ENCODE measurements at regions of chr11 and their contacts with region 1.

Region 1: DNA sequence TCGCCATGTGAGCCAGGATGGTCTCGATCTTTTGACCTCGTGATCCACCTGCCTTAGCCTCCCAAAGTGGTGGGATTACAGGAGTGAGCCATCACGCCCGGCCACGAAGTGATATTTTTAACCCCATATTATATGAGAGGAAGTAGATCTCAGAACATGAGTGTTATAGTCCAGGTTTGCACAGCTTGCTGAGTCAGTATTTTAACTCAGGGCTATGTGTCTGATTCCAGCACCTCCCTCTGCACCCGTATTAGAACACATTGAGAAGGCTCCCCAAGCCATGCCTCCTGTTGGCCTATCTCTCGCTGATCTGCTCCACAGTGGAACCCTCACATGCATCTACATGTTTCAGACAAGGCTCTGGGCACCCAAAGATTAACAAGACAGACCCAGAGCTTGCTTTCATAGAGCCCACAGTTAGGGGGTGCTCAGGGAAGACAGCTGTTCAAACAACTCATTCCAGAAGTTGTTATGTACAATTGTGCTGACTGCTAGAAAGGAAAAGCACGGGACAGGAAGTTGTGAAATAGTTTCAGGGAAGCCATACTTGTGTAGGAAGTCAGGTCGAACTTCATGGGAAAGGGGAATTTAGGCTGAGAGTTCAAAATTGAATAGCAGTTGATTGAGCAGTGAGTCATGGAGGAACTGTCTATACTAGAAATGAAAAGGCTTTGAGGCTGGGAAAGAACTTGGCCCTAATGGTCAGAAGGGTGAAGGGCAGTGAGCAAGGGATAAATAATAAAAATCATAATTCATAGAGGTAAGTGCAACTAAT is 49.3 kb upstream of the CLPB start:
- DNase-seq: no peak
- ATAC-seq: peak; percentile 49
- H3K4me3 Mint-ChIP-seq: no peak overlapping the region
- H3K27ac Mint-ChIP-seq: peak overlapping the region; percentile 40
- H3K4me1 Mint-ChIP-seq: peaks cover 16% of the 10 kb centered on the region
- H3K27me3 Mint-ChIP-seq: peaks cover 8% of the 10 kb centered on the region

Region 2: DNA sequence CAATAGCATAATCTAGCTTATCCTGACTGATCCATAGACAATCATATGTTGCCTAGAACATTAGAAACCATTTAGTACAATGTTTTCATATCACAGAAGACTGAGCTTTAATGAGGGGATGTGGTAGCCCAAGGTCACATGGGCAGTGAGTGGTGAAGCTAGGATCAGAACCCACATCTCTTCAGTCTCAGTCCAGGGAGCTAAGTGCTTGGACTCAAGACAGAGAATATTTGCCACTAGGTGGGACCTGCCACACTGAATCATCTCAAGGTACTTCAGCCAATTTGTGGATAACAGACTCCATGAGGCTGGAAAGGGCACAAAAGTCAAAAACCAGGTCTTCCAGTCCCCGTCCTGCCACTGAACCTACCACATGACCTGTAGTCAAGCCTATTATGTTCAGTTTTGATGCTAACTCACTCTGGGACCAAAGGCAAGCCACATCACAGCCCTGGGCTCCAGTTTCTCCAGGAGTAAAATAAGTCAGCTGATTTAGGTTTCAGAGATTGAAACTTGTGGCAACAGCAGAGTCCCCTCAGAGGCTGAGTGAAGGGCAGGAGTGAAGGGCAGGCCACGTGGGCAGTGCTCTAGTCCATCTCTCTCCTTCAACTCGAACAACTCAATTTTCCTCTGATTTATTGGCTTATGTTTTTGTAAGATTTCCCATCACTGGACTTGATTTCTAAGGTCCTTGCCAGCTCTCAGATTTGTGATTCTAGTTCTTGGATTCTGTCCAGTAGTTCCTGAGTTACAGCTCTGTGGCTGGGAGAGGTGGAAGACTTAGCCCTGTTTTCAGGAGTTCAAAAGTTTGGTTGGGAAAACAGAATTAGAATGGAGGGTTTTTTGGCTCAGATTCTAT is 155.0 kb before region 1 on chr11:
- CTCF ChIA-PET with region 1: no interaction called
- DNase-seq: peak; percentile 62
- ATAC-seq: peak; percentile 55
- H3K4me3 Mint-ChIP-seq: no peak overlapping the region
- H3K27ac Mint-ChIP-seq: peak overlapping the region; percentile 64
- H3K4me1 Mint-ChIP-seq: peaks cover 62% of the 10 kb centered on the region
- H3K27me3 Mint-ChIP-seq: no peaks in the 10 kb centered on the region

Region 3: DNA sequence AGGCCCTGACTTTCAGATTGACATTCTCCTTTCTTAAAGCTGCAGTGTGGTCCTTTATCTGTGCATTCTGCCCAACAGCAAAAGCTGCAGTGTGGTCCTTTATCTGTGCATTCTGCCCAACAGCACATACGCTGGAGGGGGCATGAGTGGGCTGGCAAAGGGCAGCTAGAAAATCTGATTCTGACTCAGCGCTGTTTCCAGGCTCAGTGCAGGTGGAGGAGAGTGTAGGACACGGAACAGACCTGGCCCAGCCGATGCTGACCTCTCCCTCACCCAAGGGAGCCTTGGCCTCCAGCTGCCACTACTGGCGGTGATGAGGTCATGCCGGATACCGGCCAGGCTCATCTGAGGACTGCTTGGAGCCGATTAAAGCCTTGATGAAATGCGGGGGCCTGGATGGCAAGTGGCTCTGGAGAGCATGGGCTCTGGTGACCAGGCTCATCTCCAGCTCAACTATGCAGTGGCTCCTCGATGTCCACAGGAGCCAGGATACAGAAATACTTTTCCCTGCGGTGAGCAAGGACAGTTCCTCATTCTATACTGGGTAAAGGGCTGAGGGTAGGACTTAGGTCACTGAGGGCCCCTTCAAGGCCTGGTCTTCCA is 133.9 kb before region 1 on chr11:
- CTCF ChIA-PET with region 1: no interaction called
- DNase-seq: no peak
- ATAC-seq: no peak
- H3K4me3 Mint-ChIP-seq: no peak overlapping the region
- H3K27ac Mint-ChIP-seq: no peak overlapping the region
- H3K4me1 Mint-ChIP-seq: no peaks in the 10 kb centered on the region
- H3K27me3 Mint-ChIP-seq: no peaks in the 10 kb centered on the region

Region 4: GRCh38 chr11:72553706-72554105 is 70.1 kb after region 1 on chr11:
- CTCF ChIA-PET with region 1: interaction called, 36 read pairs
- DNase-seq: peak; percentile 66
- ATAC-seq: peak; percentile 73
- H3K4me3 Mint-ChIP-seq: no peak overlapping the region
- H3K27ac Mint-ChIP-seq: no peak overlapping the region
- H3K4me1 Mint-ChIP-seq: peaks cover 12% of the 10 kb centered on the region
- H3K27me3 Mint-ChIP-seq: peaks cover 19% of the 10 kb centered on the region

Region 5: DNA sequence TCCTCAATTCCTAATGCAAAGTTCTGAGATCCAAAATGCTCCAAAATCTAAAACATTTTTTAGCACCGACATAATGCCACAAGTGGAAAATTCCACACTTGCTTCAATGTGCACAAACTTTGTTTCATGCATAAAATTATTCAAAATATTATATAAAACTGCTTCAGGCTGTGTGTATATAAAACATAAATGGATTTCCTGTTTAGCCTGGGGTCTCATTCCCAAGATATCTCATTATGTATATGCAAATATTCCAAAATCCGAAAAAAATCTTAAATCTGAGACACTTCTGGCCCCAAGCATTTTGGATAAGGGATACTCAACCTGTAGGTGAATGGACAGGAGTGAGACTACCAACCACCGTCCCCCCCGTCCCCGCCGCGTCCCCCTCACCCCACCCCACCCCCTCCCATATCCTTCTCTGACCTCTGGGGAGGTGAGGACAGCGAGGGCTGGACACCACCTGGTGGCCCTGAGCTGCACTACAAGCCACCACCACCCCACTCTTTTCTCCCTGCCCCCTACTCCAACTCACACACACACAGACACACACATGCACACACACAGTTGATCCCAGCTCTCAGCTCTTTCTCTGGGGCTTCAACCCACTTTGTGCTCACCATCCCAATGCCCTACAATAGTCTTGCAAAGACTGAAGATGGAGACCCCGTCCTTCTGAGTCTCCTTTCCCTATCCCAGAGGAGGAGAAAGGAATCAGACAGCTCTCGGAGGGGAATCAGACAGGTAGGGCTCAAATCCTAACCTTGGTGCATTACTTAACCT is 89.7 kb after region 1 on chr11:
- CTCF ChIA-PET with region 1: interaction called, 19 read pairs
- DNase-seq: peak; percentile 52
- ATAC-seq: peak; percentile 77
- H3K4me3 Mint-ChIP-seq: no peak overlapping the region
- H3K27ac Mint-ChIP-seq: no peak overlapping the region
- H3K4me1 Mint-ChIP-seq: peaks cover 22% of the 10 kb centered on the region
- H3K27me3 Mint-ChIP-seq: peaks cover 10% of the 10 kb centered on the region

Measured in activated CD8-positive, alpha-beta memory T cell treated with anti-CD3 and anti-CD28 coated beads, Interleukin-2, amount 10 ng/mL, durations not matched to agents 7 days and 5 days (primary cell).